Caco-2 (cell line): ENCODE measurements at regions of chr5 and their contacts with region 1.

Region 1: DNA sequence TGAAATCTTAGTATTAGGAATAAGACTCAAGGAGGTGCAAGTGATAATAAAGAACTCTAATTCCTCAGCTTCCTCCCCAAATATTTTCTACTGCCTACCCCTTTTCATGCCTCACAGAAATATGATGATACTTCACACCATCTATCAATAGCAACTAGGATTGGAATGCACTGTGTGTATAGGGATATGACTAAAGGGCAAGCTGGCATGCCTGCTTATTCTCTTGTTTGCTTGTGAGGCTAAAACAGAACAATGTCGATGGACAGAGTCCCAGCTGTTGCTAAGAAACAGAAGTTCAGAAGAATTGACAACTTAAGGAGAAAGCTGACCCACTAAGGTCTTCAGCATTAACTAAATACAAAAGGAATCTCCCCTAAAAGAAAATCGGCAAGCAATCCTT is 9.7 kb upstream of the CHD1 start:
- DNase-seq: peak in 1 of 2 experiments; percentile 17
- H3K4me3 ChIP-seq: no peak overlapping the region
- H3K4me3 Mint-ChIP-seq: no peak overlapping the region
- H3K27ac Mint-ChIP-seq: no peak overlapping the region
- H3K4me1 ChIP-seq: peaks cover 8% of the 10 kb centered on the region
- H3K4me1 Mint-ChIP-seq: no peaks in the 10 kb centered on the region
- H3K27me3 ChIP-seq: no peaks in the 10 kb centered on the region
- H3K27me3 Mint-ChIP-seq: no peaks in the 10 kb centered on the region
- CTCF ChIP-seq: no peak

Region 2: DNA sequence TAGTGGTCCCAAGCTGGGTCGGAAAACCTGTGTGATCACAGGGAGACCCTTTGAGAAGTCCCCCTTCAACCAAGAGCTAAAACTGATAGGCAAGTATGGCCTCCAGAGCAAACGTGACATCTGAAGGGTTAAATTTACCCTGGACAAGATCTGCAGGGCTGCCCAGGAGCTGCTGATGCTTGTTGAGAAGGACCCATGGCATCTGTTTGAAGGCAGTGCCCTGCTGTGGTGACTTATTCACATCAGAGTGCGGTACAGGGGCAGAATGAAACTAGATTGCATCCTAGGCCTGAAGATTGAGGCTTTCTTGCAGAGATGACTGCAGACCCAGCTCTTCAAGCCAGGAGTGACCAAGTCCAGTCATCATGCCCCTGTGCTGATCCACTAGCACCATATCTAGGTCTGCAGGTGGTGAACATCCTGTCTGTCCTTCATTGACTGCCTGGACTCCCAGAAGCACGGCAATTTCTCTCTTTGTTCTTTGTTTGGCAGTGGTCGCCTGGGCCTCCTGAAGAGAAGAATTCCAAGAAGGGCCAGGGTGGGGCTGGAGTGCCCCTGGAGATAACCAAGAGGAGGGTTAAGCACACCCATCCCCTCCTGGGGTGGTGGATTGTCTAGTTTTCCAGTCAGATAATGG is 16.0 kb after region 1 on chr5:
- CTCF ChIA-PET with region 1: no interaction called
- POLR2A ChIA-PET with region 1: no interaction called
- intact Hi-C with region 1: loop called (anchors 2 kb)
- DNase-seq: no peak
- H3K4me3 ChIP-seq: no peak overlapping the region
- H3K4me3 Mint-ChIP-seq: no peak overlapping the region
- H3K27ac Mint-ChIP-seq: no peak overlapping the region
- H3K4me1 ChIP-seq: 0 out of 2 replicates have a peak, but pooled peaks cover 5% of the 10 kb centered on the region
- H3K4me1 Mint-ChIP-seq: no peaks in the 10 kb centered on the region
- H3K27me3 ChIP-seq: no peaks in the 10 kb centered on the region
- H3K27me3 Mint-ChIP-seq: no peaks in the 10 kb centered on the region
- CTCF ChIP-seq: no peak